Activated naive CD4-positive, alpha-beta T cell treated with anti-CD3 and anti-CD28 coated beads, Interleukin-2, amount 10 ng/mL, durations not matched to agents 7 days and 5 days (primary cell): ENCODE measurements at regions of chr11 and their contacts with region 1.

Region 1: DNA sequence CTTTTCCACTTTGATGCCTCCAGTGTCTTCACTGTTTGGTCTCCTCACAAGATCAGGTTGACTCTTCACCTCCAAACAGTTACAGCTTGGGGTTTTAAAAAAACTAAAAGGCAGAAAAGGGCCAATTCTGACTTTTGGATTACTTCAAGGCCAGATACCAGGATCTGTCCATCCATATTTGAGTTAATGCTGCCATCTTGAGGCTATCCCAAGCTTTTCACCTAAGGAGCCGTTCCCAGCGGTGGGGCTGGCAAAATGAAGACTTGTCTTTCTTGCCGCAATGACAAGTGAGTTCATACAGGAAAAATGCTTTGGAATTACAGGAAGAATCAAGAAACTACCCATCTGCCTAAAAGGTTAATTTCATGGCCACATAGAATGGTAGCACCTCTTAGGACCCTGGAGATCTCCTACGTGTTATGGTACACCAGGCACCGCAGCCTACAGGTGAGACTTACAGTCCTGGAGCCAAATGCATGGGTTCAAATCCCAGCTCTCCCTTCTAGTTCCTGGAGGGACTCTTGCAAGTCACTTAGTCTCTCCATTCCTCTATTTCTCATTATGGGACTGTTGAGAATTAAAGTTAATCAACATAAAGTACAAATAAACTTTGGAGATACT is 6.0 kb upstream of the OR5B21 start:
- DNase-seq: peak; percentile 25
- H3K4me3 Mint-ChIP-seq: no peak overlapping the region
- H3K27ac Mint-ChIP-seq: no peak overlapping the region
- H3K4me1 Mint-ChIP-seq: no peaks in the 10 kb centered on the region
- H3K27me3 Mint-ChIP-seq: no peaks in the 10 kb centered on the region

Region 2: DNA sequence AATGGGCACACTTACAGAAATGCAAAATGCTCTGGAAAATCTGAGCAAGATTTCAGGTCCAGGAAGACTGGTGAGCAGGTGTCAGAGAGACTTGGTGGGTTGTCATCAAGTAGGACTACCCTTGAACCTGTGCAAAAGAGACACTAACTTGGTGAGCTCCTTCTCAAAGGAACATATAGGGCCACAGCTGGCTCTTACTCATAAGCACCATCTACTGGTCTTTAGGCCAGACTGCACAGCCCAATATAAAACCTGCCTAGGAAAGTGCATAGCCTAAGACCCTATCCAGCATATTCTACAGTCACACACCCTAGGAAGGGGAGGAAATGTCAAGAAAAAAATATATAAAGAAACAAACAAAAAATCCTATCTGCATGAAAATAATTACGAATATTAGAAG is 227.6 kb before region 1 on chr11:
- CTCF ChIA-PET with region 1: interaction called, 10 read pairs
- DNase-seq: no peak
- H3K4me3 Mint-ChIP-seq: no peak overlapping the region
- H3K27ac Mint-ChIP-seq: no peak overlapping the region
- H3K4me1 Mint-ChIP-seq: no peaks in the 10 kb centered on the region
- H3K27me3 Mint-ChIP-seq: no peaks in the 10 kb centered on the region

Region 3: GRCh38 chr11:58530236-58530635 is 16.4 kb after region 1 on chr11:
- CTCF ChIA-PET with region 1: no interaction called
- DNase-seq: peak; percentile 75
- H3K4me3 Mint-ChIP-seq: no peak overlapping the region
- H3K27ac Mint-ChIP-seq: peak overlapping the region; percentile 81
- H3K4me1 Mint-ChIP-seq: peaks cover 55% of the 10 kb centered on the region
- H3K27me3 Mint-ChIP-seq: no peaks in the 10 kb centered on the region

Region 4: GRCh38 chr11:58730507-58731089 is 216.7 kb after region 1 on chr11:
- CTCF ChIA-PET with region 1: no interaction called
- DNase-seq: no peak
- H3K4me3 Mint-ChIP-seq: no peak overlapping the region
- H3K27ac Mint-ChIP-seq: no peak overlapping the region
- H3K4me1 Mint-ChIP-seq: peaks cover 24% of the 10 kb centered on the region
- H3K27me3 Mint-ChIP-seq: no peaks in the 10 kb centered on the region